MCF 10A (cell line): ENCODE measurements at regions of chr15 and their contacts with region 1.

Region 1: GRCh38 chr15:101288908-101289513 is 6.0 kb downstream of the SNRPA1 start:
- DNase-seq: peak; percentile 61
- H3K4me3 Mint-ChIP-seq: no peak overlapping the region
- H3K27ac Mint-ChIP-seq: peak overlapping the region; percentile 64
- H3K4me1 Mint-ChIP-seq: peaks cover 21% of the 10 kb centered on the region
- H3K27me3 Mint-ChIP-seq: no peaks in the 10 kb centered on the region
- CTCF ChIP-seq: peak; percentile 59

Region 2: GRCh38 chr15:101277943-101278564 is 11.0 kb before region 1 on chr15:
- CTCF ChIA-PET with region 1: interaction called, 10 read pairs
- POLR2A ChIA-PET with region 1: interaction called, 34 read pairs
- intact Hi-C with region 1: no loop called
- DNase-seq: no peak
- H3K4me3 Mint-ChIP-seq: peak overlapping the region; percentile 100
- H3K27ac Mint-ChIP-seq: peak overlapping the region; percentile 99
- H3K4me1 Mint-ChIP-seq: peaks cover 13% of the 10 kb centered on the region
- H3K27me3 Mint-ChIP-seq: no peaks in the 10 kb centered on the region
- CTCF ChIP-seq: no peak

Region 3: GRCh38 chr15:101326462-101327135 is 37.6 kb after region 1 on chr15:
- CTCF ChIA-PET with region 1: no interaction called
- POLR2A ChIA-PET with region 1: no interaction called
- intact Hi-C with region 1: no loop called
- DNase-seq: no peak
- H3K4me3 Mint-ChIP-seq: no peak overlapping the region
- H3K27ac Mint-ChIP-seq: no peak overlapping the region
- H3K4me1 Mint-ChIP-seq: no peaks in the 10 kb centered on the region
- H3K27me3 Mint-ChIP-seq: no peaks in the 10 kb centered on the region
- CTCF ChIP-seq: no peak